Right ventricle myocardium superior (tissue), 1 donor: ENCODE measurements at regions of chr10 and their contacts with region 1.

Region 1: GRCh38 chr10:87861953-87862678 is 1.2 kb downstream of the KLLN start:
- DNase-seq: peak; percentile 98
- ATAC-seq: peak; percentile 89

Region 2: GRCh38 chr10:87915989-87916388 is 53.9 kb after region 1 on chr10:
- intact Hi-C with region 1: loop called (anchors 10 kb)
- DNase-seq: no peak
- ATAC-seq: no peak

Region 3: GRCh38 chr10:88004451-88004850 is 142.3 kb after region 1 on chr10:
- intact Hi-C with region 1: no loop called
- DNase-seq: no peak
- ATAC-seq: no peak

Region 4: GRCh38 chr10:88114368-88114767 is 252.3 kb after region 1 on chr10:
- intact Hi-C with region 1: loop called (anchors 5 kb)
- DNase-seq: peak; percentile 48
- ATAC-seq: peak; percentile 79

Region 5: DNA sequence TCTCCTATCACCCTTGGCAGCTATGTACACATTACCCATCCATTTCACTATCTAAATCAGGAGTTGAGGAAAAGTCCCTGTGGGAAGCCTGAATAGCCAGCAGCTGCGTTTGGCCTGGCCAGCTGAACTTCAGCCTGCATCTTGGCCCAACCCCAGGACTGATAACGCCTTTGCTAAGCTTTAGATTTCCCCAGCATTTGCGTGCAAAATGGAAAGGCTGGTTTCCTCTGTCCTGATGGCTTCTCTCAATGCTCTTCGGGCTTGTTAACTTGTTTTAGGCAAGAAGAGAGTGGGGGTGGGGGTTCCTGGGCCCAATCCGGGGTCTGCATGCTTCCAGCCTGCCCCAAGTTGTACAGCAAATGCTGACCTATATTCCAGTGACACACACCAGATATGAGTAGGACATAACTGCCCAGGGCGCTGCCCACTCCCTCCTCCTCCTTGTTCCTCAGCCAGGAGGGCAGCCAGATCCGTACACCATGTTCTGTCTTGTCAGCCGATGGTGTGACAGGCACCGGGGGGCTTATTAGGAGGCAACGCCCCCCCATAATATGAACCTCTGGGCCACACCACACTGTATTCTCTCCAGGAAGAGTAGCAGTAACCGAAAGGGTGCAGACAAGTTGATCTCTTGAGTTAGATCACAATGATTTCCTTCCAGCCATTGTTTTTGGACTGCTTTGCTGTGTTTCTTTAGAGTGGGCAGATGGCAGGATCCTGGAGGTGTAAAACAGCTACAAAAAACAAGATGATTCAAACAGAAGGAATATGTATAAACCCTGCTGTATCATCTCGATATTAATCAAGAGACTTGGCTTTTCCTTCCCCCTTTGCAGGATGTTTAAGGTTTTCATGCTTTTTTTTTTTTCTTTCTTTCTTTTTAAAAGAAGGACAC is 382.0 kb after region 1 on chr10:
- intact Hi-C with region 1: loop called (anchors 5 kb)
- DNase-seq: peak; percentile 88
- ATAC-seq: peak; percentile 92

Region 6: GRCh38 chr10:88386821-88387773 is 525.0 kb after region 1 on chr10:
- intact Hi-C with region 1: loop called (anchors 5 kb)
- DNase-seq: no peak
- ATAC-seq: peak; percentile 88

Region 7: GRCh38 chr10:88553116-88553752 is 691.1 kb after region 1 on chr10:
- intact Hi-C with region 1: loop called (anchors 5 kb)
- DNase-seq: no peak
- ATAC-seq: peak; percentile 94